K562 (cell line): ENCODE measurements at regions of chr14 and their contacts with region 1.

Region 1: DNA sequence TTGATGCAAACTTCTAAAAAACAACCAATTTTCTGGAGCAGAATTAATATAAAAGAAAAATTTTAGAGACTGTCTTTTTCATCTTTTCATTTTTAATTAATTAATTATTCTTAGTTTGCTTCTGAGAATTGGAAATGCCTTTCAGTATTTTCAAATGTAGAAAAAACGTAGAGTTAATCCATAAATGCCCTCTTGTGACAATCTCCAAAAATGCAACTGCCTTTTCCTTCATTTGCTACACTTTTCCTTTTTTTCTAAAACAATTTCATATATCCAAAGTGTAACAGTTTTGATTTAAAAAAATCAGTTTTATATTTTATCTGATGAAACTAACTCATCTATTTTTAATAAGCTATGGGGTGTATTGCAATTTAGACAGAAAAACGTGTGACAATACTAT is 409.3 kb downstream of the PRKD1 start:
- DNase-seq: no peak
- ATAC-seq: no peak
- H3K4me3 ChIP-seq: no peak overlapping the region
- H3K27ac ChIP-seq: no peak overlapping the region
- H3K4me1 ChIP-seq: no peaks in the 10 kb centered on the region
- H3K27me3 ChIP-seq: no peaks in the 10 kb centered on the region
- CTCF ChIP-seq: peak in 1 of 3 experiments; percentile 21; a peak in 1 of 6 replicates
- EP300 ChIP-seq: no peak
- POLR2A ChIP-seq: no peak
- RAD21 ChIP-seq: no peak

Region 2: DNA sequence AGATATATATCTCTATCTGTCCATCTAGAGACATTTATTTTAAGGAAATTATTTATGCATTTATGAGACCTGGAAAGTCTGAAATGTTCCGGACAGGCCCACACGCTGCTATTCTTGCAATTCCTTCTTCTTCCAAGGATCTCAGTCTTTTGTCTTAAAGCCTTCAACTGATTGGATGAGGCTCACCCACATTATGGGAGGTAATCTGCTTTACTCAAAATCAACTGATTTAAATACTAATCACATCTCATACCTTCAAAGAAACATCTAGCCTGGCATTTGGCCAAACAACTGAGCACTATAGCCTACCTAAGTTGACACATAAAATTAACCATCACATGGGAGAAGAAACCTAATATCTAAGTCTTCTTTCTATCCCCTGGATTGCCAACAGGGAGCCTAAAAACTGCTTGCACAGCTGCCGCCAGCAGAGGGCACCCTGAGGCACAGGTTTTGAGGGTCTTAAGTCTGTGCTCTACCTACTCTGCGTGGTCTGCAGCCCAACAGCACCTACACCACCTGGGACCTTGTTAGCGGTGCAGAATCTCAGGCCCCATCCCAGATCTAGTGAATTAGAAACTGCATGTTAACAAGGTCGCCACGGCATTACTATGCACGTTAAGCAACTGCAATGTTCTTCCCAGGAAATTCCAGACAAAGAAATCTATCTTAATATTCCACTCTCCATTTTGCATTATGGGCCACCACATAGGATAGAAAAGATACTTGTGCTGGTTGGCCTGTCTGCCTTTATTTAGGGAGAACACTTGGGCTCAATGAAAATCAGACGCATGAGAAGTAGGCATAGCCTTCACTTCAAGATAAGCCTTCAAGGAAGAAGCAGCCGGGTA is 502.1 kb before region 1 on chr14:
- CTCF ChIA-PET with region 1: no interaction called
- POLR2A ChIA-PET with region 1: no interaction called
- in situ Hi-C with region 1: no loop called
- intact Hi-C with region 1: loop called (anchors 10 kb)
- DNase-seq: peak; percentile 7 to 25 (median 12)
- ATAC-seq: peak; percentile 64
- H3K4me3 ChIP-seq: no peak overlapping the region
- H3K27ac ChIP-seq: no peak overlapping the region
- H3K4me1 ChIP-seq: no peaks in the 10 kb centered on the region
- H3K27me3 ChIP-seq: no peaks in the 10 kb centered on the region
- CTCF ChIP-seq: peak; percentile 41 to 67 (median 58)
- EP300 ChIP-seq: no peak
- POLR2A ChIP-seq: no peak
- RAD21 ChIP-seq: peak in 1 of 2 experiments; percentile 43; a peak in 2 of 4 replicates

Region 3: GRCh38 chr14:29529418-29529817 is 11.1 kb after region 1 on chr14:
- CTCF ChIA-PET with region 1: no interaction called
- POLR2A ChIA-PET with region 1: no interaction called
- in situ Hi-C with region 1: no loop called
- intact Hi-C with region 1: no loop called
- DNase-seq: peak; percentile 3 to 17 (median 12)
- ATAC-seq: peak; percentile 73
- H3K4me3 ChIP-seq: no peak overlapping the region
- H3K27ac ChIP-seq: no peak overlapping the region
- H3K4me1 ChIP-seq: no peaks in the 10 kb centered on the region
- H3K27me3 ChIP-seq: no peaks in the 10 kb centered on the region
- CTCF ChIP-seq: peak; percentile 38 to 47 (median 46); a peak in 4 of 6 replicates
- EP300 ChIP-seq: no peak
- POLR2A ChIP-seq: no peak
- RAD21 ChIP-seq: peak in 1 of 2 experiments; percentile 35; a peak in 2 of 4 replicates